CD4-positive, alpha-beta T cell (primary cell): ENCODE measurements at regions of chr16 and their contacts with region 1.

Region 1: DNA sequence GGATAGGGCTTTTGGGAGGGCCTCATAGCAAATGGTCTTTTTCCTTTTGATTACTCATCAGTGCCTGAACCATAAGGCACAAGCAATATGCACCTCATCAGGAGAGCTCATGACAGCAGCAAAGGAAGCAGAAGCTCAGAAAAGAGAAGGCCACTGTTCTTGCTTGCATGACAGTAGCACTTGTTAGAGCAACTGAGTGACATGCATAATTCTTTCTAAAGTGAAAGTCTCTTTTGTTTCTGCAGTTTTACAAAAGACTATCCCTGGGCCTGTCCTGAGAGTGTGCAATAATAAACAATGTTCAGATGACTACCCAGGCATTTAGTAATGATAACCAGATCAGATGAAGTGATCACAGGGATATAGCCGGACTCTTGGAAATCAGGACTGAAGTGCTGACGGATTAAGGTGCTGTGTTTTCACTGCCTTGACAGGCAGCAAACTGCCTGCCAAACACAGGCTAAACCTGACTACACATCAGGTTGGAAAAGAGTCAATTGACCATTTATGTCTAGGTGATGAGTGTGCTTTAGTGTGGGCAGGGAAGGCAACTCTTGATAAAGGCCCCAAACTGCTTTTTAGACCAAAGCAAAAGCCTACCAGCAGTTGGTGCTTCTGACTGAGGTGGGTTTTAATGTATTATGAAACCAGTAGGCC is 1860.3 kb downstream of the TP53TG3F start:
- DNase-seq: no peak
- ATAC-seq: no peak
- H3K4me3 ChIP-seq: no peak overlapping the region
- H3K4me3 Mint-ChIP-seq: no peak overlapping the region
- H3K27ac ChIP-seq: no peak overlapping the region
- H3K27ac Mint-ChIP-seq: no peak overlapping the region
- H3K4me1 ChIP-seq: no peaks in the 10 kb centered on the region
- H3K4me1 Mint-ChIP-seq: no peaks in the 10 kb centered on the region
- H3K27me3 ChIP-seq: no peaks in the 10 kb centered on the region
- H3K27me3 Mint-ChIP-seq: no peaks in the 10 kb centered on the region
- CTCF ChIP-seq: no peak

Region 2: DNA sequence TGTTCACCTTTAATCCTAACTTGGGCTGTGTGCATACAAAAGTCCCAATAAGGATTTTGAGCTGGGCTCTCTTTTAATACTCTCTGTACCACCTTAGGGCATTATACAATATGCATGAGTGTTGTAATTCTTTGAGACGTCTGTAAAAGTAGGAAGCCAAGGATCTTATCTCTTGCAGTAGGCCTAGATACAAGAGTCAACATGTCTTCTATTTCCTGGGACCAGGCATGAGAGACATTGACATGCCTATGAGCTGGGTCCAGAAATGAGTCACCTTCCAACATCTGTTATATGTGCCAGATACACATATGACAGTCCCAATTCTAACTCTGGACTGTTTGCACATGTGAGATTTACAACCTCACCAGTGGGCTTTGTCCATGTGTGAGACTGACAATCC is 51.0 kb after region 1 on chr16:
- CTCF ChIA-PET with region 1: no interaction called
- POLR2A ChIA-PET with region 1: no interaction called
- intact Hi-C with region 1: loop called in 1 of 2 experiments (anchors 10 kb)
- DNase-seq: no peak
- ATAC-seq: no peak
- H3K4me3 ChIP-seq: no peak overlapping the region
- H3K4me3 Mint-ChIP-seq: no peak overlapping the region
- H3K27ac ChIP-seq: no peak overlapping the region
- H3K27ac Mint-ChIP-seq: no peak overlapping the region
- H3K4me1 ChIP-seq: no peaks in the 10 kb centered on the region
- H3K4me1 Mint-ChIP-seq: no peaks in the 10 kb centered on the region
- H3K27me3 ChIP-seq: no peaks in the 10 kb centered on the region
- H3K27me3 Mint-ChIP-seq: no peaks in the 10 kb centered on the region
- CTCF ChIP-seq: no peak